Ascending aorta (tissue), 2 donors: ENCODE measurements at regions of chr15 and their contacts with region 1.

Region 1: GRCh38 chr15:89017370-89018066 is 70.7 kb upstream of the ABHD2 start:
- DNase-seq: peak; percentile 55 to 96
- H3K4me3 ChIP-seq: peak overlapping the region; percentile 36 to 40
- H3K27ac ChIP-seq: peak overlapping the region; percentile 95 to 96
- H3K4me1 ChIP-seq: peaks cover 22 to 51% of the 10 kb centered on the region in 2 donors
- H3K27me3 ChIP-seq: no peaks in the 10 kb centered on the region
- CTCF ChIP-seq: peak; percentile 76 to 82 (median 79)

Region 2: DNA sequence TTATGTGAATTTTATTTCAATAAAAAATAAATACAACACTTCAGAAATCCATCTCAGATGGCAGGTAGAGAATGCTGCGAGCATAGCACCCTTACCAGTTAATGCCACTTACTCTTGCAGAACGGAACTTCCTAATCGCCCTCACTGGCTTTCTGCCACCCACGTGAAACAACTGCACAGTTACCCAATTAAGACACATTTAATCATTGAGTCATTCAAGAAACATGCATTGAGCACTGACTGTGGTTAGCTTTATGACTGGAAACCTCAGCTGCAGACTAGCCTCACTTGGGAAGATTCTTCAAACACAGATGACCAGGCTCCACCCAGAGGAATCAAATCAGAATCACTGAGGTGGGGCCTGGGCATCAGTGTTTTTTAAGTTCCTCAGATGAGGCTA is 98.8 kb before region 1 on chr15:
- intact Hi-C with region 1: loop called (anchors 1 kb)
- DNase-seq: peak; percentile 69 to 96
- H3K4me3 ChIP-seq: no peak overlapping the region
- H3K27ac ChIP-seq: peak overlapping the region; percentile 73 to 76
- H3K4me1 ChIP-seq: peaks cover 0 to 18% of the 10 kb centered on the region in 2 donors
- H3K27me3 ChIP-seq: no peaks in the 10 kb centered on the region
- CTCF ChIP-seq: no peak

Region 3: GRCh38 chr15:88954431-88955277 is 62.9 kb before region 1 on chr15:
- intact Hi-C with region 1: no loop called
- DNase-seq: peak; percentile 65 to 90
- H3K4me3 ChIP-seq: no peak overlapping the region
- H3K27ac ChIP-seq: peak overlapping the region; percentile 85 to 95
- H3K4me1 ChIP-seq: peaks cover 0 to 7% of the 10 kb centered on the region in 2 donors
- H3K27me3 ChIP-seq: no peaks in the 10 kb centered on the region
- CTCF ChIP-seq: no peak

Region 4: GRCh38 chr15:88982304-88982945 is 35.1 kb before region 1 on chr15:
- intact Hi-C with region 1: loop called (anchors 2 kb)
- DNase-seq: peak; percentile 24 to 93
- H3K4me3 ChIP-seq: no peak overlapping the region
- H3K27ac ChIP-seq: peak overlapping the region; percentile 17 to 64
- H3K4me1 ChIP-seq: peaks cover 0 to 13% of the 10 kb centered on the region in 2 donors
- H3K27me3 ChIP-seq: no peaks in the 10 kb centered on the region
- CTCF ChIP-seq: no peak

Region 5: GRCh38 chr15:89101302-89102191 is 84.0 kb after region 1 on chr15:
- intact Hi-C with region 1: loop called (anchors 5 kb)
- DNase-seq: peak; percentile 73 to 96
- H3K4me3 ChIP-seq: no peak overlapping the region
- H3K27ac ChIP-seq: peak overlapping the region; percentile 96 to 98
- H3K4me1 ChIP-seq: peaks cover 24 to 89% of the 10 kb centered on the region in 2 donors
- H3K27me3 ChIP-seq: no peaks in the 10 kb centered on the region
- CTCF ChIP-seq: no peak

Region 6: GRCh38 chr15:89177633-89178306 is 160.3 kb after region 1 on chr15:
- intact Hi-C with region 1: no loop called
- DNase-seq: peak in 1 of 2 donors; percentile 81
- H3K4me3 ChIP-seq: no peak overlapping the region
- H3K27ac ChIP-seq: peak overlapping the region in 1 of 2 donors; percentile 2
- H3K4me1 ChIP-seq: peaks cover 0 to 17% of the 10 kb centered on the region in 2 donors
- H3K27me3 ChIP-seq: no peaks in the 10 kb centered on the region
- CTCF ChIP-seq: peak; percentile 76 to 88 (median 77)